Posterior vena cava (tissue), 2 donors: ENCODE measurements at regions of chr1 and their contacts with region 1.

Region 1: GRCh38 chr1:206469933-206470691 is at the start of gene IKBKE:
- DNase-seq: peak; percentile 87
- total RNA-seq, gene IKBKE: 4.8 to 6.5 TPM

Region 2: GRCh38 chr1:206526064-206526911 is 56.2 kb after region 1 on chr1:
- intact Hi-C with region 1: no loop called
- DNase-seq: no peak

Region 3: DNA sequence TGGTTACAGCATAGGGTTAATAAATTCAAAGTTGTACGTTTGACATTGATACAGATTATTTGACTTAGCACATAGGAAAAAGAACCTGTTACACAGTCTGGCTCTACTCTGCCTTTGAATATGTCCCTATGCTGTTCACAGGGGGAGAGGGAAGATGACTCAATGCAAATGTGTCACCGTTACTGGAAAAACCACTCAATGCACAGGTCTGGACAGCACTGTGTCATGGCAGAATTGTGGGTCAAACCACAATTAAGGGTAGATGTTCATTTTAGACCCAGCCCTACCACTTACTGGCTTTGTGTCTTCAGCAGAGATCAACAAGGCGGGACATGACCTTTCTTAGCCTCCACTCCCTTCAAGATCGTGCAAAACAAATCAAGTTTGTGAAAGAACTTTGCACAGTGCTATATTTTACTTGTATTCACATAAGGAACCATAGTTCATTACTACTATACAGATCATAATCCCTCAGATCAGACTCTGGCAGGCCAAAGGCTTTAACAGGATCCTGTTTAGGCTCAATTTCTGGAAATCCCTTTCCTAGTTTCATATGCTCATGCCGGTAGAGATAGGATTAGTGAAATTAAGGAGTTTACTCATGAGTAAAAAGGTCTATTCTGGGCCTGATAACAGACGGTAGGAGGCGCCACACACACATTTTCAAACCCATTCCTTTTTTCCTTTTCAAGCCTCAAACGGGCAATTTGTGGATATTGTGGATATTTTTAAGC is 120.1 kb after region 1 on chr1:
- intact Hi-C with region 1: no loop called
- DNase-seq: no peak

Region 4: GRCh38 chr1:206674745-206675175 is 204.6 kb after region 1 on chr1:
- intact Hi-C with region 1: no loop called
- DNase-seq: peak; percentile 83

Region 5: GRCh38 chr1:207172885-207173284 is 702.8 kb after region 1 on chr1:
- intact Hi-C with region 1: loop called in 1 of 2 experiments (anchors 10 kb)
- DNase-seq: no peak